Activated CD8-positive, alpha-beta memory T cell treated with anti-CD3 and anti-CD28 coated beads, Interleukin-2, amount 10 ng/mL, durations not matched to agents 7 days and 5 days (primary cell): ENCODE measurements at regions of chr12 and their contacts with region 1.

Region 1: GRCh38 chr12:57238854-57239554 is 9.5 kb downstream of the SHMT2 start:
- DNase-seq: peak; percentile 92
- ATAC-seq: peak; percentile 71
- H3K4me3 Mint-ChIP-seq: peak overlapping the region; percentile 84
- H3K27ac Mint-ChIP-seq: peak overlapping the region; percentile 79
- H3K4me1 Mint-ChIP-seq: peaks cover 50% of the 10 kb centered on the region
- H3K27me3 Mint-ChIP-seq: peaks cover 52% of the 10 kb centered on the region

Region 2: GRCh38 chr12:57182921-57183790 is 55.8 kb before region 1 on chr12:
- CTCF ChIA-PET with region 1: interaction called, 17 read pairs
- DNase-seq: peak; percentile 84
- ATAC-seq: peak; percentile 97
- H3K4me3 Mint-ChIP-seq: no peak overlapping the region
- H3K27ac Mint-ChIP-seq: no peak overlapping the region
- H3K4me1 Mint-ChIP-seq: peaks cover 2% of the 10 kb centered on the region
- H3K27me3 Mint-ChIP-seq: no peaks in the 10 kb centered on the region

Region 3: DNA sequence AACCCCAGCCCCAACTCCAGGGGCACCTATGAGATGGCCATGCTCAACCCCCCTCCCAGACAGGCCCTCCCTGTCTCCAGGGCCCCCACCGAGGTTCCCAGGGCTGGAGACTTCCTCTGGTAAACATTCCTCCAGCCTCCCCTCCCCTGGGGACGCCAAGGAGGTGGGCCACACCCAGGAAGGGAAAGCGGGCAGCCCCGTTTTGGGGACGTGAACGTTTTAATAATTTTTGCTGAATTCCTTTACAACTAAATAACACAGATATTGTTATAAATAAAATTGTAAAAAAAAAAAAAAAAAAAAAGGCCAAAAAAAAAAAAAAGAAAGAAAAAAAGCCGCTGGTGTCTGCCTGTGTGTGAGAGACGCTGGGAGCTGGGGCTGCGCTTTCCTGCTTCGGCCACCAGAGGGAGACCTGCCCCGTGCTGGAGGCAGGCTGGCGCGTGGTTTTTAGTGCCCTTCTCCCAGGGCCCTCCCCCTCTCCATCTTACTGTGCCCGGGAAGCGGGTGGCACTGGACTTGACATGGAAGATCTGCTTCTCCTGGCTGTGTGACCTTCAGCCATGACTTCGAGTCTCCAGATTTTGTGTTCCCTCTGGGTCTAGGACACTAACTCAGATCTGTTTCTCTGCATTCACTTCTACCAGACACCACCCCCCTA is 25.8 kb before region 1 on chr12:
- CTCF ChIA-PET with region 1: interaction called, 647 read pairs
- DNase-seq: peak; percentile 89
- ATAC-seq: peak; percentile 57
- H3K4me3 Mint-ChIP-seq: no peak overlapping the region
- H3K27ac Mint-ChIP-seq: no peak overlapping the region
- H3K4me1 Mint-ChIP-seq: peaks cover 30% of the 10 kb centered on the region
- H3K27me3 Mint-ChIP-seq: peaks cover 41% of the 10 kb centered on the region

Region 4: DNA sequence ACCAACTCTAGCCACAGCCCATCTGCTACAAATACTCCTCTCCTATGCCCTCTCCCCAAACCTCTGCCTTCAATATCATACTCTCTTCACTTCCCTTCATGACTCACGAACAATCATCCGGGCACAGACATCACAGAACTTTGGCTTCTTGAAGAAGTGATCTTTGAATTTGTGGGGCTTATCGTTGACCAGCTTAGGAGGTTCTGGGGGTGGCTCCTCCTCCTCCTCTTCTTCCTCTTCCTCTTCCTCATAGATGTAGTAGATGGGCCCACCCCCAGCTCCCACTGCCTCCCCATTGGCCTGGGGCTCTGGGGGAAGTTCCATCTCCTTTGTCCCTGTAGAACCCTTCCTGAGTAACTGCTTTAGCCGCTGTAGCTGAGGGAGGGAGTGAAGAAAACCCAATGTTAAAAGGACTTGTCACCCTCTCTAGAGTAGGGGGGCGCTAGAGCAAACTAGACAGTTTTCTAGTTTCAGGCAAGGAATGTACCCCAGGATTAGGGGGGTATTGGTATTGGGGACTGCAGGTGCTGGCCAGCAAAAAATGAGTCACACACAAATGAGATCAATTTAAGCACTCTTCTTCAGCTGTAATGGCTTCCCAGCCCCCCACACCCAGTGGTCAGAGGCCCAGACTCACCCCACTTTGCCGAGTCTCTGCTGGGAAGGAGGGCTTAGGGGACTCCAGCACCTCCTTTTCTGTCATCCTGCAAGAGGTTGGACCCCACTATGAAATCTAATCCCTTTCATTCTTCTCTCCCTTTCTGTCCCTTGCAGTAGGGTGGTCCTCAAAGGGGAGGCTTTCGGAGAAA is 10.1 kb after region 1 on chr12:
- CTCF ChIA-PET with region 1: interaction called, 540 read pairs
- DNase-seq: no peak
- ATAC-seq: peak; percentile 56
- H3K4me3 Mint-ChIP-seq: peak overlapping the region; percentile 61
- H3K27ac Mint-ChIP-seq: peak overlapping the region; percentile 36
- H3K4me1 Mint-ChIP-seq: peaks cover 11% of the 10 kb centered on the region
- H3K27me3 Mint-ChIP-seq: no peaks in the 10 kb centered on the region

Region 5: GRCh38 chr12:57261428-57261865 is 22.4 kb after region 1 on chr12:
- CTCF ChIA-PET with region 1: interaction called, 57 read pairs
- DNase-seq: no peak
- ATAC-seq: no peak
- H3K4me3 Mint-ChIP-seq: no peak overlapping the region
- H3K27ac Mint-ChIP-seq: no peak overlapping the region
- H3K4me1 Mint-ChIP-seq: peaks cover 8% of the 10 kb centered on the region
- H3K27me3 Mint-ChIP-seq: no peaks in the 10 kb centered on the region

Region 6: DNA sequence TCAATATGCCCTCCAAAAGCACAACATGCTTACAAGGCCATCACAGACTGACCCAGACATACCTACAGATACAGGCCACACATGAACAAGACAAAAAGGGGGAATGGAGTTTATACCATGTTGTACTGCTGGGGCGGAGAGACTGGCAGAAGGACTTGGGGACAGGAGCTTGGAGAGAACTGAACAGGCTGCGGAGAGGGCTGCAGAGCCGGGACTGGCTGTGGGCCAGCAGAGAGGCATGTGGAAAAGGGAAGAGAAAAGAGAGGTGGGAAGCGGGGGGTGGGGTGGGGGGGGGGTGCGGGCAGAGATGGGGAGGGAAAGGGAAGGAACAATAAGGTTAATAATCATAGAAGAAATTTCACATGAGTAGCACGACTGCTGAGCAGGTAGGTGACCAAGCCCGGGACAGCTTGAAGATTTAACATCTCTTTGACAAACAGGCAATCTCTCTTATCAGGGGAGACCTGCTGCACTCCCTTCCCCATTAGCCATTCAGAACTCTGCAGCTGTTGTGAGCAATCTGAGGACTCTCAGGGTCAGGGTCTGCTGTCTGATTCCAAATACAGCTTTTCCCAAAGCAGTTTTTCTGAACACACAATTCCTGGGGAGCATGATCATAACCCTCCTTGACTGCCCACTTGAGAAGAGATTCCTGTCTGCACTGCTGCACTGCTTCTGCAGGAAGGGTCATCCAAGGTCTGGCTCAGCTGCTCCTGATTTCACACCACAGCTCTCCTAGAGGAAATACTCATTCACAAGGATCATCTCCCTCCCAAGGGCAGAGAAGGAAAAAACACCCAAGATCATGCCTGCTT is 33.5 kb after region 1 on chr12:
- CTCF ChIA-PET with region 1: interaction called, 57 read pairs
- DNase-seq: no peak
- ATAC-seq: no peak
- H3K4me3 Mint-ChIP-seq: no peak overlapping the region
- H3K27ac Mint-ChIP-seq: no peak overlapping the region
- H3K4me1 Mint-ChIP-seq: peaks cover 7% of the 10 kb centered on the region
- H3K27me3 Mint-ChIP-seq: no peaks in the 10 kb centered on the region

Region 7: DNA sequence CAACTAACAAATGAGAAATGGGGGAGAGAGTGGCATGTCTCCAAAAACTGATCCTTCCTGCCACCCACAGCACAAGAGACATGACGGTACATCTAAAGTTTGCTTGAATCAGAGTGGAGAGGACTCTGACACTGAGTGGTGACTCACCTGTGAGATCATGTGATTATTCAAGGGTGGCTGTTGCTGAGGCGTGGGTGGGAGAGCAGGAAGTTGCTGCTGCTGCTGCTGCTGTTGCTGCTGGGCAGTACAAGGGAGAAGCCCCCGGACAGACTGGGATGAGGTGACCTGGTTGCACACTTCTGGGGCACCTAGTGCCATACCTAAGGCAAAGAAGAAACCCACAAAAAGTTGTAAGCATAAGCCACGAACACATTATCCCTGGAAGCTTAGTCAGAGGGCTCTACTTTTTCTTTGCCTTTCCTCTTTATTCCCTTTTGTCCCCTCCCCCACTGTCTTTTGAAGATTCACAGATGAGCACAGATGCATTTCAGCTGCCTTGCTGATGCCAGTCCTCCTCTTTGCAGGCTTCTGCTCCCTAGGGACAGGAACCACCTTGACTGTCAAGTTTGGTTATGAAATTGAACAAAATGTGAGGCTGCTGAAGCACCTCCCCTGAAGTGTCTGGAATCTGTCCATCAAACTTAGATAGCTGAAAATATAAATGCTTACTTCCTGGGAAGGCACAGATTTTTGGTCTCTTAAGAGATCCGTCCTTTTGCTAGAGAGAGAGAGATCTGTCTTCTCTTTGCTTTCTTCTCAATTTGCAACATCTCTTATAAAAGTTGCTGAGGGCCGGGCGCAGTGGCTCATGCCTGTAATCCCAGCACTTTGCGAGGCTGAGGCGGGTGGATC is 41.4 kb after region 1 on chr12:
- CTCF ChIA-PET with region 1: interaction called, 11 read pairs
- DNase-seq: peak; percentile 87
- ATAC-seq: peak; percentile 100
- H3K4me3 Mint-ChIP-seq: peak overlapping the region; percentile 14
- H3K27ac Mint-ChIP-seq: peak overlapping the region; percentile 93
- H3K4me1 Mint-ChIP-seq: peaks cover 17% of the 10 kb centered on the region
- H3K27me3 Mint-ChIP-seq: no peaks in the 10 kb centered on the region

Region 8: DNA sequence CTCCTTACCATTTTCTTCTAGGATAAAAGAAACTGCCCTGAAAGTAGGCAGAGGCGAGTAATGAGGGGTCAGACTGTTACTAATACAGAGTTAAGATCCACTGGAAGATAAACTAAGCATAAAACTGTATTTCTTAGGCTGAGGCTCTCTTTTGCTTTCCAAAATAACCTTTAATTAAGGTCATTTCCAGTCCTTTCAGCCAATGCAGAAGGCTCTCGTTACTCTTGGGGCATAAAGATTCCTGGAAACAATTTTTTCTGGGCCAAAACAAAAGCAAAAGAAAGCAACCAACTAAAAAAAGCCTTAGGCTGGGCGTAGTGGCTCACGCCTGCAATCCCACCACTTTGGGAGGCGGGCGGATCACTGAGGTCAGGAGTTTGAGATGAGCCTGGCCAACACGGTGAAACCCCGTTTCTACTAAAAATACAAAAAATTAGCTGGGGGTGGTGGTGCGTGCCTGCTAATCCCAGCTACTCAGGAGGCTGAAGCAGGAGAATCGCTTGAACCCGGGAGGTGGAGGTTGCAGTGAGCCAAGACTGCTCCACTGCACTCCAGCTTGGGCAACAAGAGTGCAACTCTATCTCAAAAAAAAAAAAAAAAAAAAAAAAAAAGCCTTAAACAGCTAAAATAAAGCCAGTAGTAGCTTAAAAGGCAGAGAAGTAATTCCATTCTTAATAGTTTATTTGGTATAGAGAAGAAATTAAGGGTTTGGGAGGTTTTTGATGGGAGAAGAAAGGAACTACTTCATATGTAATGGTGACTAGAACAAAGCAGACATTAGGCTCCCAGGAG is 80.9 kb after region 1 on chr12:
- CTCF ChIA-PET with region 1: no interaction called
- DNase-seq: no peak
- ATAC-seq: no peak
- H3K4me3 Mint-ChIP-seq: no peak overlapping the region
- H3K27ac Mint-ChIP-seq: no peak overlapping the region
- H3K4me1 Mint-ChIP-seq: no peaks in the 10 kb centered on the region
- H3K27me3 Mint-ChIP-seq: no peaks in the 10 kb centered on the region